ENCODE measurements at regions of chr16 and their contacts with region 1.

Region 1: GRCh38 chr16:57447186-57447962 is at the starts of genes CIAPIN1 and COQ9:
- DNase-seq: peak; percentile 90
- H3K4me3 Mint-ChIP-seq: peak within 1 kb of the TSS; percentile 94
- H3K27ac Mint-ChIP-seq: peak within 1 kb of the TSS; percentile 90
- H3K4me1 Mint-ChIP-seq: peaks cover 37% of the 10 kb centered on the region
- H3K27me3 Mint-ChIP-seq: no peaks in the 10 kb centered on the region
- total RNA-seq, gene CIAPIN1: 98.0 and 98.4 TPM in 2 replicates
- total RNA-seq, gene COQ9: 51.2 and 51.6 TPM in 2 replicates

Region 2: GRCh38 chr16:56931892-56932720 is 515.3 kb before region 1 on chr16 and contains the start of gene HERPUD1:
- intact Hi-C with region 1: loop called (anchors 10 kb)
- DNase-seq: peak; percentile 99
- H3K4me3 Mint-ChIP-seq: peak within 1 kb of the TSS; percentile 95
- H3K27ac Mint-ChIP-seq: peak within 1 kb of the TSS; percentile 94
- H3K4me1 Mint-ChIP-seq: peaks cover 41% of the 10 kb centered on the region
- H3K27me3 Mint-ChIP-seq: no peaks in the 10 kb centered on the region
- total RNA-seq, gene HERPUD1: 176 and 178 TPM in 2 replicates

Region 3: DNA sequence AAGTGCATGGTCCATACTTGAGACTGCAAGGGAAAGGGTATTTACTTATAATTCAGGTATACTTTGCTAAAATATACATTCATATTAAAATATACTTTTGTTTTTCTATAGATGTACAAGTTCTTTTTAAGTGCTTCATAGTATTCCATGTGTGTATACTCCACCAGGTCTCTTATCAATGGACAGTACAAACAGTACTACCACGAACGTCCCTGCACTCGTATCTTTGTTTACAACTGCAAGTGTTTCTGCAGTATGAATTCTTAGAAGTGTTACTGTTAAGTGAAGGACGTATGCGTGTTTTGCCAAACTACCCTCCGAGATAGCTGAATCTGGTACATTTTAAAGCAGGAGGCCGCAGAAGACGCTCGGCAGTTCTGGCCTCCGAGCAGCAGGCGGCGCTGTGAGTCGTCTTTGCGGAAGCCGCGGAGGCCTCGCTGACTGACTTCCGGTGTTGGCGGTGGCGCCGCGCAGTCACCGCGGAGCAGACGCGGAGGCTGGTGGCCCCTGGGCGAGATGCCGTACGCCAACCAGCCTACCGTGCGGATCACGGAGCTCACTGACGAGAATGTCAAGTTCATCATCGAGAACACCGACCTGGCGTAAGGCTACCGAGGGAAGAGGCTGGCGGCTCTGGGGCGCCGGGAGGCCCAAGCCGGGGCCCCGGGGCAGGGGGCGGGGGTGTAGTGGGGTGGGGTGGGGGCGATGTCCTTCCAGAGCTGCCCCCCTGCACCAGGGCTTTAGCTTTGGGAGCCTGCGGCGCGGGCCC is 15.0 kb after region 1 on chr16 and contains the start of gene POLR2C:
- intact Hi-C with region 1: loop called (anchors 1 kb)
- DNase-seq: peak; percentile 89
- H3K4me3 Mint-ChIP-seq: peak within 1 kb of the TSS; percentile 100
- H3K27ac Mint-ChIP-seq: peak within 1 kb of the TSS; percentile 99
- H3K4me1 Mint-ChIP-seq: peaks cover 43% of the 10 kb centered on the region
- H3K27me3 Mint-ChIP-seq: no peaks in the 10 kb centered on the region
- total RNA-seq, gene POLR2C: 89.2 and 90.9 TPM in 2 replicates

Region 4: DNA sequence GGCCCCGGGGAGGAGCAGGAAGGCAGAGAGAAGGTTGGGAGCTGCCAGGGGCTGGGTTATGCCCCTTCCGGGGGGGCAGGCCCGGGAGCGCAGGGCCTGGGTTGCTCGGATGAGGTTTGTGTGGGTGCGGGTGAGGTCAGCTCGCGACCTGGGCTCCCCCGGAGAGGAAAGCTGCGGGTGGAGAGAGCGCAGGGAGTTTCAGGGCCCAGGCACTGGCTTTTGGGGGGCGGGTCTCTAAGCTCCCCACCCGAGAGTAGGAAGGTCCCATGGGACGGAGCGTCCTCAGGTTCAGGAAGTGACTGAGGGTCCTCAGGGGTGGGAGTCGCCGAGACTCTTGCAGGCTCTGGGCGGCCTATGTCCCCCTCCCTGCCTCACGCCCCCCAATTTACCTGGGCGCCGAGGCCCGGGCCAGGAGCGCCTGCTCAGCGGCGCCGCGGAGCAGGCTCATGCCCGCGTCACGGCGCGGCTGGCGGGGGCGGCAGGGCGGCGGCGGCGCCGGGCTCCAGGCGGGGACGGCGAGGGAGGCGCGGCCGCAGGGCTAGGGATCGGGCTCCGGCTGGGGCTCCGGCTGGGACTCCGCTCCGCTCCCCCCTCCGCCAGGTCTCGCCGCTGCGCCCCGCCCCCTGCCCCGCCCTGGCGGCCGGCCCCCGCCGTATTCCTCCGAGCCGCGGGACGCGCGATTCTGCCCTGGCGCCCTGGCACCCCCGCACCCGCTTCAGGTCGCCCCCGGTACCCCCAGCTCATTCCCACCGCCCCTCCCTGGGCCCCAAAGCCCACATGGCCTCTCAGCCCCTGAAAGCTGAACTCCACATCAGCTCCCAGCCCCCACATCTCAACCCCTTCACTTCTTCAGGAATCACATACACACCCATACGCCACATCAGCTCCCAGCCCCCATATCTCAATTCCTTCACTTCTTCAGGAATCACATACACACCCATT is 38.8 kb after region 1 on chr16 and contains the start of gene DOK4:
- intact Hi-C with region 1: loop called (anchors 1 kb)
- DNase-seq: peak; percentile 71
- H3K4me3 Mint-ChIP-seq: peak within 1 kb of the TSS; percentile 84
- H3K27ac Mint-ChIP-seq: peak within 1 kb of the TSS; percentile 61
- H3K4me1 Mint-ChIP-seq: peaks cover 20% of the 10 kb centered on the region
- H3K27me3 Mint-ChIP-seq: peaks cover 20% of the 10 kb centered on the region
- total RNA-seq, gene DOK4: 4.4 and 4.9 TPM in 2 replicates

Region 5: GRCh38 chr16:57535680-57536305 is 88.4 kb after region 1 on chr16:
- intact Hi-C with region 1: loop called (anchors 2 kb)
- DNase-seq: peak; percentile 92
- H3K4me3 Mint-ChIP-seq: peak overlapping the region; percentile 78
- H3K27ac Mint-ChIP-seq: peak overlapping the region; percentile 93
- H3K4me1 Mint-ChIP-seq: peaks cover 62% of the 10 kb centered on the region
- H3K27me3 Mint-ChIP-seq: no peaks in the 10 kb centered on the region

Measured in activated T-helper 1 cell treated with anti-CD3 and anti-CD28 coated beads, Interleukin-12 subunit alpha, Interleukin-12 subunit beta, Interleukin-2, Interleukin-4 antibody, amounts not matched to agents 30 ng/mL and 10 ng/mL and 1 ng/mL, durations not matched to agents 14 hours and 24 hours and 36 hours (primary cell).